ENCODE measurements at regions of chr1 and their contacts with region 1.

Region 1: GRCh38 chr1:23916209-23917131 is 3.3 kb upstream of the CNR2 start:
- DNase-seq: peak; percentile 85
- H3K4me3 Mint-ChIP-seq: no peak overlapping the region
- H3K27ac Mint-ChIP-seq: no peak overlapping the region
- H3K4me1 Mint-ChIP-seq: peaks cover 6% of the 10 kb centered on the region
- H3K27me3 Mint-ChIP-seq: no peaks in the 10 kb centered on the region
- CTCF ChIP-seq: peak; percentile 78

Region 2: GRCh38 chr1:23539698-23540266 is 376.7 kb before region 1 on chr1:
- CTCF ChIA-PET with region 1: no interaction called
- POLR2A ChIA-PET with region 1: no interaction called
- intact Hi-C with region 1: loop called (anchors 10 kb)
- DNase-seq: peak; percentile 90
- H3K4me3 Mint-ChIP-seq: no peak overlapping the region
- H3K27ac Mint-ChIP-seq: no peak overlapping the region
- H3K4me1 Mint-ChIP-seq: peaks cover 18% of the 10 kb centered on the region
- H3K27me3 Mint-ChIP-seq: no peaks in the 10 kb centered on the region
- CTCF ChIP-seq: peak; percentile 91

Region 3: GRCh38 chr1:23772049-23772853 is 144.2 kb before region 1 on chr1:
- CTCF ChIA-PET with region 1: interaction called, 32 read pairs
- POLR2A ChIA-PET with region 1: interaction called, 7 read pairs
- intact Hi-C with region 1: loop called (anchors 2 kb)
- DNase-seq: peak; percentile 86
- H3K4me3 Mint-ChIP-seq: no peak overlapping the region
- H3K27ac Mint-ChIP-seq: no peak overlapping the region
- H3K4me1 Mint-ChIP-seq: no peaks in the 10 kb centered on the region
- H3K27me3 Mint-ChIP-seq: no peaks in the 10 kb centered on the region
- CTCF ChIP-seq: peak; percentile 92

Region 4: DNA sequence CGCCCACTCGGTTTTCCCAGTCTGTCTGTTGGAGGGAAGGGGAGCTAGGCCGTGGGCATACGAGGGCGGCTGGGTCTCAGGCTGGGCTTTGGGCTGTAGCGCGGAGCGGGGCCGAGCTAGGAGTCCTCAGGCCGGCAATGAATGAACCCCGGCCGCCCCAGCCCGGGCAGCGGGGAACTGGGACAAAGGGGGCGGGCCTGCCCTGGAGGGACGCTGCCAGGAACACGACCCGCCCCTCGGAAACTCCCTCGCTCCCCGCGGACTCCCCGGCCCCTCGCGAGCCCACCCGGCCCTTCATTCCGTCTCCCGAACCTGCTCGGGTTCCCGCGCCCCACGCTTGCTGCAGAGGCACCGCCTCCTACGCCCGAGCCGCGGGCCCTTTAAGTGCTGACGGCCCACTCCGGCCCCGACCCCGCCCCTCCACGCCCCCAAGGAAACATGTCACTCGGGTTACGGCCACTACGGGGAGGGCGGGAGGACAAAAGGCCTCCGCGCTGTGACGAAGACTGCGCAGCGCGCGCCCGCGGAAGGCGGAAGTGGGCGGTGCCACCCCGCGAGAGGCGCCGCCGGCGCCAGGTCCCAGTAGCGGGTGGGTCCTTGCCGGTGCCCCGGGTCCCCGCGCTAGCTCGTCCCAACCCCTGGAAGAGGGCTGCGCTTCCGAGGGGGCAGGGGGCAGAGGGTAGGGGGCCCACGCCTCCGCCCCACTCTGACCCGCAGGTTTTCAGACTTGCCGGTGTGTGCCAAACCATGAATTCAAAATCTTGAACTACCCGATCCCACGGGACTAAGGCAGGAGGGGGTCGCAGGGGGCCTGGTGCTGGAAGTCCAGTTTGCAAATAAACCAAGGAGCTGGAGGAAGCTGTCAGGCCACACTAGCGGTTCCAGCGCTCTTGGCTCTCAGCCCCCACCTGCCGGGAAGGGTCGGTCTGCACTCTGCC is 115.8 kb before region 1 on chr1 and contains the start of gene GALE:
- CTCF ChIA-PET with region 1: interaction called, 14 read pairs
- POLR2A ChIA-PET with region 1: interaction called, 9 read pairs
- intact Hi-C with region 1: no loop called
- DNase-seq: peak; percentile 96
- H3K4me3 Mint-ChIP-seq: peak within 1 kb of the TSS; percentile 90
- H3K27ac Mint-ChIP-seq: peak within 1 kb of the TSS; percentile 91
- H3K4me1 Mint-ChIP-seq: no peaks in the 10 kb centered on the region
- H3K27me3 Mint-ChIP-seq: no peaks in the 10 kb centered on the region
- CTCF ChIP-seq: no peak
- total RNA-seq, gene GALE: 112 and 143 TPM in 2 replicates

Region 5: DNA sequence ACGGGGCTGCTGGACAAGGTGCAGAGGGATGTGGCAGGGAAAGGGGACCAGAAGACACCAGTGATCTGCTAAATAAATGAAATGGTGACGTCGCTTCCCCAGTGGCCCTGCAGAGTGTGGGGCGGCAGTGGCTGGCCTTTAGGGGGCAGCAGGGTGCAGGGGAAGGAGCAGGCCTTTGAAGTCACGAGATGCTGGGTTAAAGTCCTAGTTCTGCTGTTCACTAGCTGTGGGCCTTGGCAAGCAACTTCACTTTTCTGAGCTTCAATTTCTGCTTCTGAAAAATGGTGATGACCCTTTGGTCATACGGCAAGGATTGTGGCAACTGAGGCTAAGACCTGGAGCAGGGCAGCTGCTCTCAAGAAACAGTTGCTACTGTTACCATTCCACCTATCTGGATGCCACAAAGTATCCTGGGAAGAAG is 106.7 kb before region 1 on chr1:
- CTCF ChIA-PET with region 1: interaction called, 44 read pairs
- POLR2A ChIA-PET with region 1: interaction called, 8 read pairs
- intact Hi-C with region 1: loop called (anchors 1 kb)
- DNase-seq: peak; percentile 77
- H3K4me3 Mint-ChIP-seq: no peak overlapping the region
- H3K27ac Mint-ChIP-seq: no peak overlapping the region
- H3K4me1 Mint-ChIP-seq: peaks cover 14% of the 10 kb centered on the region
- H3K27me3 Mint-ChIP-seq: no peaks in the 10 kb centered on the region
- CTCF ChIP-seq: peak; percentile 72

Region 6: GRCh38 chr1:23930861-23931490 is 14.5 kb after region 1 on chr1:
- CTCF ChIA-PET with region 1: interaction called, 21 read pairs
- POLR2A ChIA-PET with region 1: interaction called, 3 read pairs
- intact Hi-C with region 1: no loop called
- DNase-seq: peak; percentile 42
- H3K4me3 Mint-ChIP-seq: peak overlapping the region; percentile 62
- H3K27ac Mint-ChIP-seq: peak overlapping the region; percentile 84
- H3K4me1 Mint-ChIP-seq: peaks cover 6% of the 10 kb centered on the region
- H3K27me3 Mint-ChIP-seq: no peaks in the 10 kb centered on the region
- CTCF ChIP-seq: no peak